HCT116 (cell line): ENCODE measurements at regions of chr13 and their contacts with region 1.

Region 1: GRCh38 chr13:35157143-35157755 is 215.2 kb downstream of the NBEA start:
- DNase-seq: peak; percentile 38
- ATAC-seq: peak; percentile 75
- H3K4me3 ChIP-seq: no peak overlapping the region
- H3K27ac ChIP-seq: no peak overlapping the region
- H3K4me1 ChIP-seq: no peaks in the 10 kb centered on the region
- H3K27me3 ChIP-seq: no peaks in the 10 kb centered on the region
- CTCF ChIP-seq: peak; percentile 44 to 79 (median 56); a peak in 5 of 6 replicates
- POLR2A ChIP-seq: no peak
- RAD21 ChIP-seq: peak; percentile 79

Region 2: DNA sequence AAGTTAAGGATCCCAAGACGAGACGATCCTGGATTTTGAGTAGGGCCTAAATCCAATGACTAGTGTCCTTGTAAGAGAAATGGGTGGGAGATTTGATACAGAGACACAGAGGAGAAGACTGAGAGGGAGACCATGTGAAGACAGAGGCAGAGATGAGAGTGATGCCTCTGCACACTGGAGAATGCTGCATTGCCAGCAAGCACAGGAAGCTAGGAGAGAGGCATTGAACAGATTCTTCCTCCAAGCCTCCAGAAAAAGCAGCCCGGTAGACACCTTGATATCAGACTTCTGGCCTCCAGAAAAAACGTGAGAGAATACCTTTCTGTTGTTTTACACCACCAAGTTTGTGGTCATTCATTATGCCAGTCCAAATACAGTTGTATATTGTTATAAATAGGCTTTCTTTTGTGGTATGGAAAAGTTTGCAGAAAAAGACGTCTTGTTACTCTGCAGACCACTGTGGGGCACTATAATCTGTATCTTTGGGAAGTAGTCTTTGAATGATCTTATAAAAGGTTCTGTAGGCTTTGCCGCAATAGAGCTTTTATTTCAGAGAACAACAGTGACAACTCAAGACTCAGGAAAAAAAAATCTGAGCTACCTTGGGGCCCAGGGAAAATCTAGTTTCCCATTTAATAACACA is 1357.2 kb before region 1 on chr13:
- CTCF ChIA-PET with region 1: interaction called, 4 read pairs
- POLR2A ChIA-PET with region 1: no interaction called
- RAD21 ChIA-PET with region 1: no interaction called
- intact Hi-C with region 1: loop called (anchors 5 kb)
- DNase-seq: peak; percentile 12
- ATAC-seq: peak; percentile 75
- H3K4me3 ChIP-seq: no peak overlapping the region
- H3K27ac ChIP-seq: no peak overlapping the region
- H3K4me1 ChIP-seq: no peaks in the 10 kb centered on the region
- H3K27me3 ChIP-seq: no peaks in the 10 kb centered on the region
- CTCF ChIP-seq: peak; percentile 16 to 58 (median 26); a peak in 3 of 6 replicates
- POLR2A ChIP-seq: no peak
- RAD21 ChIP-seq: peak; percentile 52; the same call in 1 of the 2 replicates

Region 3: DNA sequence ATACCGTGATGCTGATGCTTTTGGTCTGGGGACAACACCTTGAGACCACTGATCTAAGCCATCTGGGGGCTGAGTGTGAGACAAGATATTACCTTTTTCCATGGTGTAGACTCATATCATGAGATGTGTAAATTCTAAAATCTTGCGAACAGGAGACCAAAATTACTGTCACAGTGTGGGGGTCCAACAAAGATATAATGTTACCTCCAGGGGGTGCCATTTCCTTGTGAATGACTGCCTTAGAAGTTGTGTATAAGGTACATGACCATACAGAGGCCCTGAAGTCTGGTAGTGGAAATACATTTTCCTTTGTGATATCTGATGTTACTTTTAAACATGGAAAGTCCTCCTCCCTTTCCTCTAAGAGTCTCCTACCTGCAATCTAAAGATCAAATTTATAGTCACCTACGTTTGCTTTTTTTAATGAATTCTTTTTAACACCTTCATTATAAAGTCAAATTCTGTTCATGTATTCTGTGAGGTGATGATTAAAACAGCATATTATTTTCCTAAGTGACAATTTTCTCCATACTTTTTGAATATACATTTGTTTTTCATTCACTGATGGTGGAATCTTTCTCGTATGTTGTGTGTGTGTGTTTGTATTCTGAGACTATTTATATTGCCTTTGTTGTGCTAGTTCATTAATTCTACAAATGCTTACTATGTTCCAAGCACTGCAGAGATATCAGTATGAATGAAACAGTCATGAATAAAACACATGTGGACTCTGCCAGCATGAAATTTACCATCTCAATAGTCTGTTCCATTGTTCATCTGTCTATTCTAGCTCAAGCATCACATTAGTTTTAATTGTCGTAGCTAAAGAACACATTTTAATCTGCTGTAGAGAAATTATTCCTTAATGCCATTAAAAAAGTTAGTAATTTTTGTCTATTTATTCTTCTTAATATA is 1225.6 kb before region 1 on chr13:
- CTCF ChIA-PET with region 1: interaction called, 4 read pairs
- POLR2A ChIA-PET with region 1: no interaction called
- RAD21 ChIA-PET with region 1: no interaction called
- intact Hi-C with region 1: loop called (anchors 1 kb)
- DNase-seq: peak; percentile 46
- ATAC-seq: peak; percentile 96
- H3K4me3 ChIP-seq: no peak overlapping the region
- H3K27ac ChIP-seq: no peak overlapping the region
- H3K4me1 ChIP-seq: peaks cover 0 to 5% of the 10 kb centered on the region in 2 experiments; a peak in 1 of 4 replicates
- H3K27me3 ChIP-seq: no peaks in the 10 kb centered on the region
- CTCF ChIP-seq: peak; percentile 48 to 72 (median 49); a peak in 5 of 6 replicates
- POLR2A ChIP-seq: no peak
- RAD21 ChIP-seq: peak; percentile 81

Region 4: DNA sequence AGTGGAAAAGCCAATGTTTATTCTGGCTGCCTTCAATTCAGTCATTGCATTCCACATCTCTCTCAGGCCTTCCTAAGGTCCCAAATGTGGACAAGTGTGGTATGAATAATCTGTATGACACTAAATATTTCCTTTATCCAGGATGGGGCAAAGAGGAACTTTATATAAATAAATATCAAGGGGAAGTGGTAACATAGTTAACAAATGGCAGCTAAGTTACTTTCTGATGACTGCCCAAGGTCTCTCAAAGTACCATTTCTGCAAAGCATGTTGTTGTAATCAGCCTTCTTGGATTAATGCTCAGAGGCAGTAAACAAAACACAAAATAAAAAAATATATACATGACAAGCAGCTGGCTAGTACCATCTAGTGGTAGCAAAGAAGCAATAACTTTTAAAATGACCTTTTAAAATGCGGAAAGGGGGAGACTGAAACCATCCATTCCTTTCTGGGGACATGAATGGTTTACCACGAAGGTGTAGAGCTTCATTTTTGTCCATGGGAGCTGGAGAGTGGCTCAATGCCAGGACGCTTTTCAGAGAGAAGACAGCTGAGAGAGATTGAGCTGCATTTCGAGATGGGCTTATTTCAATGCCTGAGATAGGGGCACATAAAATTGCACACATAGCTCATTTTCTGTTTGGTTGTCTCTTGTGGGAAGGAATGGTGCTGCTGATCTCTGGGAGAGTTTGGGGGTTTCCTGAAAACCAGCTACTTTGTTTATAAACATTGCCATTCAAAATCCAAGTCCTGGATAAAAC is 1080.1 kb before region 1 on chr13:
- CTCF ChIA-PET with region 1: no interaction called
- POLR2A ChIA-PET with region 1: no interaction called
- RAD21 ChIA-PET with region 1: no interaction called
- intact Hi-C with region 1: loop called (anchors 1 kb)
- DNase-seq: peak; percentile 7
- ATAC-seq: peak; percentile 68
- H3K4me3 ChIP-seq: no peak overlapping the region
- H3K27ac ChIP-seq: no peak overlapping the region
- H3K4me1 ChIP-seq: no peaks in the 10 kb centered on the region
- H3K27me3 ChIP-seq: no peaks in the 10 kb centered on the region
- CTCF ChIP-seq: peak; percentile 54 to 73 (median 64); a peak in 5 of 6 replicates
- POLR2A ChIP-seq: no peak
- RAD21 ChIP-seq: peak; percentile 81

Region 5: DNA sequence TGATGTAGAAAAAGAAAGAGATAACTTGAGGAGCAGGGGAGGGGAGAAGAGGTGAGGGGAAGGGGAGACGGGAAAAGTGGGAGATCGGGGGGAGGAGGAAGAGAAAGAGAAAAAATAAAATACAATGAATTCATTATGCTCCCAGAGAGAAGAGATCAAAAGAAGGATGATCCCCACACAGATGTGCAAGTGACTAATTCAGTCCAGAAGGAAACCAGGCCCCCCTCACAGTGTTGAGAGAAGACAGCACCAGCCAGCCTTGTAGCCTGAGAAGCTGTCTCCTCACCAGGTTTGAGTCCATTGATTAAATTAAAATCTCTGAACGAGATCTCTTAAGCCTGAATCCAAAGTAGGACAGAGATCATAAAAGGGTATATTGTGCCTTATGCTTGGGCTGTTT is 548.9 kb before region 1 on chr13:
- CTCF ChIA-PET with region 1: no interaction called
- POLR2A ChIA-PET with region 1: no interaction called
- RAD21 ChIA-PET with region 1: no interaction called
- intact Hi-C with region 1: loop called (anchors 10 kb)
- DNase-seq: no peak
- ATAC-seq: no peak
- H3K4me3 ChIP-seq: no peak overlapping the region
- H3K27ac ChIP-seq: no peak overlapping the region
- H3K4me1 ChIP-seq: no peaks in the 10 kb centered on the region
- H3K27me3 ChIP-seq: no peaks in the 10 kb centered on the region
- CTCF ChIP-seq: no peak
- POLR2A ChIP-seq: no peak
- RAD21 ChIP-seq: no peak

Region 6: GRCh38 chr13:34833562-34834182 is 323.6 kb before region 1 on chr13:
- CTCF ChIA-PET with region 1: no interaction called
- POLR2A ChIA-PET with region 1: no interaction called
- RAD21 ChIA-PET with region 1: no interaction called
- intact Hi-C with region 1: loop called (anchors 10 kb)
- DNase-seq: peak; percentile 10
- ATAC-seq: peak; percentile 100
- H3K4me3 ChIP-seq: no peak overlapping the region
- H3K27ac ChIP-seq: no peak overlapping the region
- H3K4me1 ChIP-seq: peaks cover 0 to 4% of the 10 kb centered on the region in 2 experiments; a peak in 1 of 4 replicates
- H3K27me3 ChIP-seq: no peaks in the 10 kb centered on the region
- CTCF ChIP-seq: peak in 2 of 3 experiments; percentile 49 to 57; a peak in 4 of 6 replicates
- POLR2A ChIP-seq: no peak
- RAD21 ChIP-seq: peak; percentile 27

Region 7: GRCh38 chr13:36154567-36155291 is 997.5 kb after region 1 on chr13:
- CTCF ChIA-PET with region 1: no interaction called
- POLR2A ChIA-PET with region 1: no interaction called
- RAD21 ChIA-PET with region 1: no interaction called
- intact Hi-C with region 1: no loop called
- DNase-seq: no peak
- ATAC-seq: no peak
- H3K4me3 ChIP-seq: no peak overlapping the region
- H3K27ac ChIP-seq: no peak overlapping the region
- H3K4me1 ChIP-seq: no peaks in the 10 kb centered on the region
- H3K27me3 ChIP-seq: no peaks in the 10 kb centered on the region
- CTCF ChIP-seq: no peak
- POLR2A ChIP-seq: no peak
- RAD21 ChIP-seq: no peak